Colonic mucosa (tissue), 4 donors: ENCODE measurements at regions of chr15 and their contacts with region 1.

Region 1: GRCh38 chr15:44308415-44308814 is 19.9 kb downstream of the GOLM2 start:
- DNase-seq: no peak
- H3K4me3 ChIP-seq: no peak overlapping the region
- H3K27ac ChIP-seq: no peak overlapping the region
- H3K4me1 ChIP-seq: peaks cover 16% of the 10 kb centered on the region
- H3K27me3 ChIP-seq: no peaks in the 10 kb centered on the region
- CTCF ChIP-seq: no peak

Region 2: DNA sequence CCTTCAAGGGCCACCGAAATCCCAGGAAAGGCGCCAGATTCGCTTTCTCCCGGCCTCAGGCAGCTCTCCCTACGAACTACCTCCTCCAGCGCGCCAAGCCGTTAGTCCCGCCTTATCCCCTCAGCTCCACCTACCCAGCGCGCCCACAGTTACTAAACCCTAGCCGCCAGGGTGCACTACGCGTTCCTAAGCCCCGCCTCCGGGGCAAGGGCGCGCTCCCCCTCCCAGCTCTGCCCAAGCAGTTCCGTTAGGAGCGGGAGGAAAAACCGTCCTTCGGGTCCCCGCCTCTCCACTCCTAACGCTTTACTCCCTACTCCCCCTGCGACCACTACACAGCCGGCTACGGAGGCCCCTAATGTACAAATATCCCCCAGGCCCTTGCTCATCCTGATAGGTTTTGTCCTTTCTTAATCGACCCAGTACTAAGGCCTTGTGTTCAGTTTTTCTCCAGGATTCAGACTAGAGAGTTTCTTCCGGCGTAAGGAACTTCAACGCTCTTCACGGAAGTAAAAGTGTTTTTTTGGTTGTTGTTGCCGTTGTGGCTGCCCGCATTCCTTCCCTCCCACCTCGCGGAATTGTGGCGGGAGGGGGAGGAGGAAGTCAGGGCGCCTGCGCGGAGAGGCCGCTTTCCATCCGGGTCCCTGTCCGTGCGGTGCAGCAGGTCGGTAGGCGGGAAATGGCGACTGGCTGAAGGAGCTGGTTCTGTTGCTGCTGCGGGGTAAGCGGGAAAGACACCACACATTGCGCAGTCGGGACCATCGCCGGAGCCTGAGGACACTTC is 118.8 kb after region 1 on chr15 and contains the start of gene CTDSPL2:
- intact Hi-C with region 1: loop called (anchors 10 kb)
- DNase-seq: peak; percentile 98
- H3K4me3 ChIP-seq: peak within 1 kb of the TSS; percentile 80
- H3K27ac ChIP-seq: peak within 1 kb of the TSS; percentile 98
- H3K4me1 ChIP-seq: peaks cover 14% of the 10 kb centered on the region
- H3K27me3 ChIP-seq: no peaks in the 10 kb centered on the region
- CTCF ChIP-seq: no peak
- total RNA-seq, gene CTDSPL2: 31.7 to 43.0 TPM